ENCODE measurements at regions of chr3 and their contacts with region 1.

Region 1: GRCh38 chr3:136861890-136862616 is at the start of gene NCK1:
- DNase-seq: peak; percentile 92 to 99
- H3K4me3 ChIP-seq: peak within 1 kb of the TSS; percentile 86
- H3K27ac ChIP-seq: peak within 1 kb of the TSS; percentile 82
- H3K4me1 ChIP-seq: peaks cover 20% of the 10 kb centered on the region
- H3K27me3 ChIP-seq: no peaks in the 10 kb centered on the region
- CTCF ChIP-seq: no peak
- total RNA-seq, gene NCK1: 42.7 and 71.4 TPM in 2 replicates

Region 2: GRCh38 chr3:136196401-136197158 is 665.5 kb before region 1 on chr3:
- CTCF ChIA-PET with region 1: no interaction called
- POLR2A ChIA-PET with region 1: interaction called, 10 read pairs
- intact Hi-C with region 1: no loop called
- DNase-seq: peak; percentile 97 to 100
- H3K4me3 ChIP-seq: peak overlapping the region; percentile 84
- H3K27ac ChIP-seq: peak overlapping the region; percentile 95
- H3K4me1 ChIP-seq: peaks cover 30% of the 10 kb centered on the region
- H3K27me3 ChIP-seq: no peaks in the 10 kb centered on the region
- CTCF ChIP-seq: no peak

Region 3: DNA sequence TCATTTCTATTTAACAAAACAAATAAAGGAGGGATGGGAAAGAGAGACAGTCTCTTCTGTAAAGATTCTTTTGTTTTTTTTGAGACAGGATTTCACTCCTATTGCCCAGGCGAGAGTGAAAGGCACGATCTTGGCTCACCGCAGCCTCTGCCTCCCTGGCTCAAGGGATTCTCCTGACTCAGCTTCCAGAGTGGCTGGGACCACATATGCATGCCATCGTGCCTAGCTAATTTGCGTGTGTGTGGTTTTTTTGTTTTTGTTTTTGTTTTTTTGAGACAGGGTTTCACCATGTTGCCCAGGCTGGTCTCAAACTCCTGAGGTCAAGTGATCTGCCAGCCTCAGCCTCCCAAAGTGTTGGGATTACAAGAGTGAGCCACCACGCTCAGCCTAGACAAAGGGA is 133.1 kb before region 1 on chr3:
- CTCF ChIA-PET with region 1: no interaction called
- POLR2A ChIA-PET with region 1: interaction called, 34 read pairs
- intact Hi-C with region 1: no loop called
- DNase-seq: no peak
- H3K4me3 ChIP-seq: no peak overlapping the region
- H3K27ac ChIP-seq: no peak overlapping the region
- H3K4me1 ChIP-seq: no peaks in the 10 kb centered on the region
- H3K27me3 ChIP-seq: no peaks in the 10 kb centered on the region
- CTCF ChIP-seq: no peak

Region 4: GRCh38 chr3:136818769-136819391 is 43.2 kb before region 1 on chr3 and contains the start of gene SLC35G2:
- CTCF ChIA-PET with region 1: no interaction called
- POLR2A ChIA-PET with region 1: no interaction called
- intact Hi-C with region 1: loop called (anchors 2 kb)
- DNase-seq: peak in 1 of 2 experiments; percentile 40
- H3K4me3 ChIP-seq: peak within 1 kb of the TSS; percentile 67
- H3K27ac ChIP-seq: peak within 1 kb of the TSS; percentile 53
- H3K4me1 ChIP-seq: peaks cover 19% of the 10 kb centered on the region
- H3K27me3 ChIP-seq: no peaks in the 10 kb centered on the region
- CTCF ChIP-seq: 0 out of 2 replicates have a peak, but pooled peaks have one; percentile 17
- total RNA-seq, gene SLC35G2: 3.1 and 5.0 TPM in 2 replicates

Region 5: DNA sequence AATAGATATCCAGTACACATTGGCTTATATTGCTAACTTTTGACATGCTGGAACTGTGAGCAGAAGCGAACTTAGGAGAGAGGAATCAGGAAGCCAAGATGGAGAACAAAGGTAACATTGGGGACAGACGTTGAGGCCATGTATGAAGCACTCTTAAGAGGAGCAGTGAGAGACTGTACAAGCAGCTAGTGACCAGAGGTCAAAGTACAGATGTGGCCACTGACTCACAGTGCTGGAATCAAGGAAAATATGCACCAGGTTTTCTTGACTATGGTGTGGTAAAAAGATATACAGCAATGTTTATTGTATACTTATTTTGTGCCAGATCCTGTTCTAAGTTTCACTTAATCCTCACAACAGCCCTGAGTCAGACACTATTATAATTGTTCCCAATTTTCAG is 93.8 kb after region 1 on chr3:
- CTCF ChIA-PET with region 1: interaction called, 5 read pairs
- POLR2A ChIA-PET with region 1: interaction called, 4 read pairs
- intact Hi-C with region 1: loop called (anchors 5 kb)
- DNase-seq: peak; percentile 57 to 92
- H3K4me3 ChIP-seq: peak overlapping the region; percentile 8; the same call in 1 of the 2 replicates
- H3K27ac ChIP-seq: peak overlapping the region; percentile 86
- H3K4me1 ChIP-seq: peaks cover 73% of the 10 kb centered on the region
- H3K27me3 ChIP-seq: no peaks in the 10 kb centered on the region
- CTCF ChIP-seq: no peak